Activated naive CD4-positive, alpha-beta T cell treated with anti-CD3 and anti-CD28 coated beads for 36 hours (primary cell): ENCODE measurements at regions of chr12 and their contacts with region 1.

Region 1: GRCh38 chr12:49967042-49967776 is 5.5 kb downstream of the AQP5 start:
- DNase-seq: peak; percentile 96
- H3K4me3 Mint-ChIP-seq: peak overlapping the region; percentile 54
- H3K27ac Mint-ChIP-seq: no peak overlapping the region
- H3K4me1 Mint-ChIP-seq: no peaks in the 10 kb centered on the region
- H3K27me3 Mint-ChIP-seq: peaks cover 33% of the 10 kb centered on the region

Region 2: DNA sequence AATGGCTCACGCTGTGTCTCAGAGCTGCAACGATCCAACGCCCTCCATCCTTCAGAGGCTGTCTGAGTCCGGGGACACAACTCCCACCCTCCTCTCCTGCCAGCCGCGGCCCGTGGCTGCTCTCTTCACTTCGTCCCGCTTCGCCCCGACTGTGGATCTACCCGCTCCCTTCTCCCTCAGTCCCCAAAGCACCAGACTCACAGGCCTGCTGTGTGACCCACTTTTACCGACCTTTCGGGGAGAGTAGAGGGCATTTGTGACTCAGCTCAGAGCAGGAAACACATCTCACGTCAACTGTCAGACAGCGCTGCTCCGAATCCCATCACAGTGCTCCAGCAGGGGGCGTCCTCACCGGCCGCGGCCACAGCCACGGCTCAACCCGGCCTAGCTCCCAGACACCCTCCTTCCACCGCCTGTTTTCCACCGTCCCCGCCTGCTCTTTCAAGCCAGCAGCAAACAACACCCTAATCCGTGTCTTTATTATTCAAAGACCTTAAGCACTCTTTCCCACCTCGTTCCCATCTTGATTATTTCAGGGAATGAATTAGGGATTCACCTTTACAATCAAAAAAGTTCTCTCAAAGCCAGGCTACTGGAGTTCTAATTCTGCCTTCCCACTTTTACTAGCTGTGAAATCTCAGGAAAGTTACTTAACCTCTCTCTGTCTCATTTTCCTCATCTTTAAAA is 21.7 kb before region 1 on chr12:
- CTCF ChIA-PET with region 1: interaction called, 65 read pairs
- intact Hi-C with region 1: loop called (anchors 2 kb)
- DNase-seq: peak; percentile 94
- H3K4me3 Mint-ChIP-seq: peak overlapping the region; percentile 74
- H3K27ac Mint-ChIP-seq: peak overlapping the region; percentile 83
- H3K4me1 Mint-ChIP-seq: peaks cover 16% of the 10 kb centered on the region
- H3K27me3 Mint-ChIP-seq: no peaks in the 10 kb centered on the region

Region 3: DNA sequence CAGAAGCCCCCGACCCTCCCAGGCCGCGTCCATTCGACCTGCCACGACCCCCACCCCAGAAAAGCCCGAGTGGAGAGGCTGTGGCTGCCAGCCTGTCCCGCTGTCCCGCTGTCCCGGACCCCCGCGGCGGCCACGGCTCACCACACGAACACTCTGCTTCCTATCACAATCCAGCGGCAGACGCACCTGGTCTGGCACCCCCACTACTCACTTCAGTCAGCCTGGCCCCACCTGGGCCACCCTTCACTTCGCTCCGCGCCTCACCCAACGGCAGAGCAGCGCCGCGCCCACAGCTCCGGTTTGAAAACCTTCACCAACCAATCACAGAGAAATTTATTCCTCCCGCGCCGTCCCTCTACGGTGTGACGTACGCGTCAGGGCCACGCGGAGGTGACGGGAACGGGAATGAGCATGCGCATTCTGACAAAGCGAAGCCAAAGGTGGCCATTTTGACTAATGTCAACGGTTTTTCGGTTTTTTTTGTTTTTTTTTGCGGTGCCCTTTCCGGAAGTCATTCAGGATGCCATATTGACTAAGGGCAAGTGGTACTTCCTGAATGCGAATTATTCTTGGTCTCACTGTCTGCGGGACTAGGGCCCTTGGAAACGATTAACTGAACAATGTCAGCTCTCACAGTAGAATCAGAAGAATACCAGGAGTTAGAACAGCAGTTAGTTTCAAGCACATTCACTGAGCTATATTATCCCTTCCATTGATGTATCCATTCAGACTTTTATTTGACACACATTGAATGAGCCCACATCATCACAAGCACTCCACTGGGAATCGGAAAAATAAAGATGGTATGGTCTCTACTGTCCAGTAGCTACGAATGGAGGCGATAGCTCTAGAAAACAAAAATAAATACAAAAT is 58.2 kb after region 1 on chr12 and contains the start of gene RACGAP1:
- CTCF ChIA-PET with region 1: interaction called, 19 read pairs
- intact Hi-C with region 1: no loop called
- DNase-seq: peak; percentile 98
- H3K4me3 Mint-ChIP-seq: peak within 1 kb of the TSS; percentile 92
- H3K27ac Mint-ChIP-seq: peak within 1 kb of the TSS; percentile 94
- H3K4me1 Mint-ChIP-seq: peaks cover 12% of the 10 kb centered on the region
- H3K27me3 Mint-ChIP-seq: no peaks in the 10 kb centered on the region
- total RNA-seq, gene RACGAP1: 156 to 159 TPM

Region 4: GRCh38 chr12:50043854-50044253 is 76.6 kb after region 1 on chr12:
- CTCF ChIA-PET with region 1: interaction called, 19 read pairs
- intact Hi-C with region 1: loop called (anchors 1 kb)
- DNase-seq: no peak
- H3K4me3 Mint-ChIP-seq: no peak overlapping the region
- H3K27ac Mint-ChIP-seq: no peak overlapping the region
- H3K4me1 Mint-ChIP-seq: peaks cover 5% of the 10 kb centered on the region
- H3K27me3 Mint-ChIP-seq: no peaks in the 10 kb centered on the region

Region 5: DNA sequence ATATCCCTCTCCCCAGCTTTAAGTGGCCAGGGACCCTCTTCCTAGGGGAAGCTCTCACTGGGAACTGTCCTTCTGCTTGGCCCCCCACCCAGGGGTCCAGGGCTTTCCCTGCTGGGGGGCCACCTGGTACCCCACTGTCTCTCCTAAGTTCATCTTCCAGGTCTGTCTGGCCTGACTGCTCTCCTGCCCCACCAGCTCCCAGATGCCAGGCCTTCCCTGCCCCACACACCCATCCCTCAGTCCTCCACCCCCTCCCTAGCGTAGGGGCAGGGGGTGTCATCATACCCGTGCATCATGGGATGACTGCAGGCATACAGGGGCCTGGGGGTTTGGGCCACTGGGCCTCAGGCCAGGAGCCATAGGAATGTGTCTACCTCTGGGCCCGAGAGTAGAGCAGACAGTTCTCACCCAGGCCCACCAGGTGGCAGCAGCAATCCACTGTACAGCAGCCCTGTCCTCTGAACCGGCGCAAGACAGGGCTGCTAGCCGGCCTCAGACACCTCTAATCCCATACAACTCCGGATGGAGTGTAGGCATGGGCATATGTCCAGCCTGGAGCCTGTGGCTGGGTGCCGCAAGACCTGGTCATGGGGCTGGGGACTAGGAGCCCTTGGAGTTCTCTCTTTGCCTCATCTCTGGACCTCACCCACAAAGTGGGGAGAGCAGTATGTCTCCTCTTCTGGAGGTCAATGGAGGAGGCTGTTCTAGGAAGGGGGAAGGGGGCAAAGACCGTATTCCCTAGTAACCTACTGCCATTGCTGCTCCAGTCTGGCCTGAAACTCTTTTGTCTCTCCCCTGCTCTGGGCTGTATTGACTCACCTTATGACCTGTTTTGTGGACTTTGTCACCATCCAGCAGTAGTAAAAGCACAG is 108.0 kb after region 1 on chr12:
- CTCF ChIA-PET with region 1: interaction called, 67 read pairs
- intact Hi-C with region 1: loop called (anchors 1 kb)
- DNase-seq: peak; percentile 88
- H3K4me3 Mint-ChIP-seq: no peak overlapping the region
- H3K27ac Mint-ChIP-seq: no peak overlapping the region
- H3K4me1 Mint-ChIP-seq: peaks cover 5% of the 10 kb centered on the region
- H3K27me3 Mint-ChIP-seq: no peaks in the 10 kb centered on the region

Region 6: DNA sequence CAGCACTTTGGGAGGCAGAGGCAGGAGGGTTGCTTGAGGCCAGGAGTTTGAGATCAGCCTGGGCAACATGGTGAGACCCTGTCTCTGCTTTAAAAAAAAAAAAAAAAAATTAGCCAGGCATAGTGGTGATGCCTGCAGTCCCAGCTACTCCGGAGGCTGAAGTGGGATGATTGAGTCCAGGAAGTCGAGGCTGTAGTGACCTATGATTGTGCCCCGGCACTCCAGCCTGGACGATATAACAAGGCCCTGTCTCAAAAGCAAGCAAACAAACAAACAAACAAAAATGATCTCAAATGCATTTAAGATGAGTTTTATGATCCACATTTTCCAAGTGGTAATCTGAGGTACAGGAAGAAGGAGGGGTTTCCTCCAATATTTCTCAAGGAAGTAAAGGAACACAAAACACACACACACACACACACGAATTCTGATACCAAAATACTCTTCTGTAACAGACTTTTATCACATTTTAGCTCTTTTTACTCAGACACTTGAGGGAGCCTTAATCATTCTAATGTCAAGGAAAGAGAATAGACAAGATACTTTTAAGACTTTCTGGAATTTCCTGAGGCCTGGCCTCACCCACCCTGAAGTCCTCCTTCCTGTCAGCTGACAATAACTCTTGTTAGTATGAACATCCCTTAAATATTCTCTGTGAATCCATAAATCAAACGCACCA is 244.3 kb after region 1 on chr12:
- CTCF ChIA-PET with region 1: no interaction called
- intact Hi-C with region 1: no loop called
- DNase-seq: peak; percentile 38
- H3K4me3 Mint-ChIP-seq: peak overlapping the region; percentile 10
- H3K27ac Mint-ChIP-seq: peak overlapping the region; percentile 88
- H3K4me1 Mint-ChIP-seq: peaks cover 40% of the 10 kb centered on the region
- H3K27me3 Mint-ChIP-seq: no peaks in the 10 kb centered on the region